ENCODE measurements at regions of chr17 and their contacts with region 1.

Region 1: GRCh38 chr17:48351831-48352332 is 78.1 kb downstream of the SKAP1 start:
- DNase-seq: no peak
- H3K4me3 Mint-ChIP-seq: no peak overlapping the region
- H3K27ac Mint-ChIP-seq: no peak overlapping the region
- H3K4me1 Mint-ChIP-seq: peaks cover 11% of the 10 kb centered on the region
- H3K27me3 Mint-ChIP-seq: no peaks in the 10 kb centered on the region

Region 2: DNA sequence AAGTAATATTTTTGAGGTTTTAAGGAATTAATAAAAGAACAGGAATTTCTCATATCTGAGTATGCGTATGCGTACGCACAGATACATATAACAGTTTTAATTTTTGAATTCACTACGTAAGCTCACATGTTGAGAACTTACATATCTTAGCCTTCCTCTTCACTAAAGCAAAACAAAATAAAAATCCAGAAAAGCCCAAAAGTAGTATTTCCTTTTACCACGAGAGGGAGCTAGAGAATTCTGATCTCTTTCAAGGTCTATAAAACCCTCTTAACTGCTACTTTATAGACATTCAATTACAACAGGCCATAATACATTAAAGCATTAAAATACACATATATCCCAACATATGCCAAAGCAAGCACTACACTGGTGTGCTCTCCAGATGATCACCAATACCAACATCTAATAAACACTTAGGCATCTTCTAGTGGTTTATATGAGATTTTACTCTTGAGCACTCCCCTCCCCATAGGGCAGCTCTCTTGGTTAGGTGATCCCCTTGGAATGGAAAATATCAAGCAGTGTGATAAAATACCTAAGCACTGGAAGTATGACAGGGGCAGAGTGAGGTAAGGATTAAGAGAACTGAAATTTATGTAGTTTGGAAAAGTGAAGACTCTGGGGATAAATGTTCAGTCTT is 15.9 kb before region 1 on chr17:
- CTCF ChIA-PET with region 1: interaction called, 39 read pairs
- POLR2A ChIA-PET with region 1: interaction called, 3 read pairs
- DNase-seq: no peak
- H3K4me3 Mint-ChIP-seq: no peak overlapping the region
- H3K27ac Mint-ChIP-seq: no peak overlapping the region
- H3K4me1 Mint-ChIP-seq: peaks cover 8% of the 10 kb centered on the region
- H3K27me3 Mint-ChIP-seq: no peaks in the 10 kb centered on the region